ENCODE measurements at regions of chr9 and their contacts with region 1.

Region 1: DNA sequence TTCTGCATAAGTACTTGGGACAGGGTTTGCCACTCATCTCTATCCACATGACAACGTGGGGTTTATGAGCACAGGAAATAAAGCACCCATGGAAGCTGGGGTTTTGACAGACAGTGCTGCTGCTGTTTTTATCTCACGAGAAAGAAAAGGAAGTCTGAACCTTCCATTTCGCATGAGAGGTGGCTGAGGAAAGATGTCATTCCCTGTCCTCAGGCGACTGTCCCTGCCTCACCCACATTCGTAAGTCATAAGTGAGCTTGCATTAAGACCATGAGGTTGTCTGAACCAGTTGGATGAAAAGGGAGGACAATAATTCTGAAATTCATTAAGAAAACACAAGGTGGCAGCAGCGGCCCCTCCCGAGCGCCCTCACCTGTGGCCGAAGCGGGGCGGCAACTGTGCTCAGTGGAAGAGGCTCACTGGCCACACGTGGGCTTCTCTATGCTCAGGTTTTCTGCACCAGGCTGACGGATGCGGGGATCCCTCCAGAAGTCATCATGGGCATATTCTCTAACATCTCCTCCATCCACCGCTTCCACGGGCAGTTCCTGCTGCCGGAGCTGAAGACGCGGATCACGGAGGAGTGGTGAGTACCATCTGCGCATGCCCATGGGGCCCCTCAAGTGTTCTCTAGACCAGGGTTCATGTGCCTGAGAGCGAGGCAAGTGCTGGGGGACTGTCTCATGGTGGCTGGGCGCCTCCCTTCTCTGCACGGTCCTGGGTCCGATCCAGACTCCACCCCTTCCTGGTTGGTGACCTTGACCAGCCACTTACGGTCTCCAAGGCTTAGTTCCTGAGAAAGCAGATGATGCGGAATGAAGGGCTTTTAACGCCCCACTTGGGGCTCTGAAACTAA is 54.7 kb upstream of the SUSD3 start:
- DNase-seq: peak; percentile 83
- ATAC-seq: peak; percentile 90
- H3K4me3 Mint-ChIP-seq: no peak overlapping the region
- H3K27ac Mint-ChIP-seq: peak overlapping the region; percentile 65
- H3K4me1 Mint-ChIP-seq: peaks cover 57% of the 10 kb centered on the region
- H3K27me3 Mint-ChIP-seq: no peaks in the 10 kb centered on the region

Region 2: DNA sequence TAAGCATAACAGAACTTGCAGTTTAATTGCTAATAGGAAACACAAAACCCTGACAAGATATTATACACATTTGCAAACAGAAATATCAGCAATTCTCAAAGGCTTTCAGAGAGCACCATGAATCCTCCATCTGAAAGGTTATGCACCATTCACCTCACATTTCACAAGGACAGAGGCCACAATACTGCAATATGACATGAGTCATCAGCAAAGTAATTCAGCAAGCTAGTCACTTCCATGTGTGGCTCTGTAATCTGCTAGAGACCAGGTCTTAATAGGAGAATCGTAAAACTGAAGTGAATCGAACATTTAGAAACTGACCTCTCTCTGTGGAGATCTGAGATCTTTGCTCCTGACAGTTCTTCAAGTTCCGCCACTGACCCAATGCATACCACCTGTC is 738.6 kb before region 1 on chr9:
- CTCF ChIA-PET with region 1: no interaction called
- POLR2A ChIA-PET with region 1: no interaction called
- intact Hi-C with region 1: no loop called
- DNase-seq: no peak
- ATAC-seq: peak; percentile 58
- H3K4me3 Mint-ChIP-seq: no peak overlapping the region
- H3K27ac Mint-ChIP-seq: no peak overlapping the region
- H3K4me1 Mint-ChIP-seq: no peaks in the 10 kb centered on the region
- H3K27me3 Mint-ChIP-seq: no peaks in the 10 kb centered on the region

Region 3: GRCh38 chr9:92954049-92954861 is 49.5 kb before region 1 on chr9:
- CTCF ChIA-PET with region 1: interaction called, 45 read pairs
- POLR2A ChIA-PET with region 1: interaction called, 6 read pairs
- intact Hi-C with region 1: loop called (anchors 1 to 2 kb)
- DNase-seq: peak; percentile 89
- ATAC-seq: peak; percentile 85
- H3K4me3 Mint-ChIP-seq: peak overlapping the region; percentile 66
- H3K27ac Mint-ChIP-seq: peak overlapping the region; percentile 97
- H3K4me1 Mint-ChIP-seq: peaks cover 78% of the 10 kb centered on the region
- H3K27me3 Mint-ChIP-seq: no peaks in the 10 kb centered on the region

Region 4: DNA sequence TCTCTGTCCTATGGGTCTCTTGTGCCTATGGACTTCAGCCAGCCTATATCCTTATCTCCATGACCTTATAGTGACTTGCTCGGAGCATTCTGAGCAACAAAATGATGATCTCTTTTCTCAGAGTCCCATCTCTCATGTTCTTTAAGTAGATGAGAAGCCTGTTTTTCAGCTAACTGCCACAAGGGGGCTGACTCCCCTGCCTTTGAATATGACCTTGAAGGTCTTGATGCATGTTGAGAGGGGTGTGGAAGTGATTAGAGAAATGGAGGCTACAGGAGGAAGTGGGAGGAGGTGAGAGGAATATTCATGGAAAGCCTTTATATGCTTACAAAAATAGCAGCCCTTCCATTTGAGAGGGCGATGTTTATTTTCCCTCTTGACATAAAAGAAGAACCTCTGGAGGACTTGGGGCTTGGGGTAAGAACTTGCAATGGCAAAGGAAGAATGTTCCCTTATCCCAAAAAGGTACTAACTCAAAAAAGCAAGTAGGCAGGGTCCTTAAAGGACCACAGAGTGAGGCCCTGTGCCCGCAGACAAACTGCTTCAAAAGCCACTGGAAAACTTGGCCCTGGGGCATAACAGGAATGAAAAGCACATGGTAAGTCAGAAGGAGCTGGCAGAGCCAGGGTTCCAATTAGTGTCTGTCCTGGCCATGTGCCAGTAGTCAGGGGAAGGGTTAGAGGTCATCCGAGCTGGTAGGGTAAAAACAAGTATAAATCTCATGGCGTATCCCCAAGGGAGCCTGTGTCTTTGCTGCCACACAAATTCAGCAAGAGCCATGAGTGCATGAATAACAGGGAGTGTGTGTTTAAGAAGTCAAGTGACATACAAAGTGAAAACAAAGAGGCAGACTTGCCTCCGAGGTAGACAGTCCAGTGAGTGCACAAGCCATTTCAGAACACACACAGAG is 17.3 kb before region 1 on chr9:
- CTCF ChIA-PET with region 1: interaction called, 48 read pairs
- POLR2A ChIA-PET with region 1: no interaction called
- intact Hi-C with region 1: no loop called
- DNase-seq: peak; percentile 69
- ATAC-seq: no peak
- H3K4me3 Mint-ChIP-seq: no peak overlapping the region
- H3K27ac Mint-ChIP-seq: peak overlapping the region; percentile 87
- H3K4me1 Mint-ChIP-seq: peaks cover 76% of the 10 kb centered on the region
- H3K27me3 Mint-ChIP-seq: no peaks in the 10 kb centered on the region

Region 5: GRCh38 chr9:92992549-92992948 is 11.2 kb before region 1 on chr9:
- CTCF ChIA-PET with region 1: interaction called, 48 read pairs
- POLR2A ChIA-PET with region 1: no interaction called
- intact Hi-C with region 1: no loop called
- DNase-seq: no peak
- ATAC-seq: no peak
- H3K4me3 Mint-ChIP-seq: no peak overlapping the region
- H3K27ac Mint-ChIP-seq: peak overlapping the region; percentile 2
- H3K4me1 Mint-ChIP-seq: peaks cover 90% of the 10 kb centered on the region
- H3K27me3 Mint-ChIP-seq: no peaks in the 10 kb centered on the region

Region 6: DNA sequence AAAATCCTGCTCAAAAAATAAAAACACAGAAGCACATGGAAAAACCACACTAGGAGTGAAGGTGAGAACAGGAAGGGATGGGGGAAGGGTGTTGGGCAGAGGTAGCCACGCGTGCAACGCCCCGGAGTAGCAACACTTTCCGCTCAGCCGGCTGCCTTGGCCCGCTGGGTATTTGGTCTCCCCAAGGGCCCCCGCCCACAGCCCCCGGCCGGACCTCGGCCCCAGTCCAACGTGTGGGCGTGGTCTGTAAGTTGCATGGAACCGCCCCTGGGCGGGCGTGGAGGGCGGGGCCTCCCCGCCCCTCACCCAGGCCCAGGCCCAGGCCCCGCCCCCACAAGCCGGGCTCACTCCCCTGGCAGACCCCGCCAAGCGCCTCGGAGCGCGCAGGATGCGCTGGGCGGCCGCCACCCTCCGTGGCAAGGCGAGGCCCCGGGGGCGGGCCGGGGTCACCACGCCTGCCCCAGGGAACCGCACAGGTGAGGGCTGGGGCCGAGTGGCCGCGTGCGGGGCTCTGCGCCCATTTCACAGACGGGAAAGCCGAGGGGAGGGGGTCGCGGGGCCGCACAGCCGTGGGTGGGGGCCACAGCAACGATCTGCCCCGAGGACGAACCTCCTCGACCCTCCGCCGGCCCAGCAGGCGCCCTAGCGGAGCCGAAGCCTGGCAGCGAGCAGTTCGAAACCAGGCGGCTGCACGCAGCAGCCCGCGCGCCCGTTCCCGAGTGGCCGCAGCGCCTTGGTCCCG is 54.7 kb after region 1 on chr9 and contains the start of gene SUSD3:
- CTCF ChIA-PET with region 1: interaction called, 5 read pairs
- POLR2A ChIA-PET with region 1: no interaction called
- intact Hi-C with region 1: loop called in 1 of 2 experiments (anchors 2 kb)
- DNase-seq: peak; percentile 86
- ATAC-seq: peak; percentile 66
- H3K4me3 Mint-ChIP-seq: peak within 1 kb of the TSS; percentile 90
- H3K27ac Mint-ChIP-seq: peak within 1 kb of the TSS; percentile 98
- H3K4me1 Mint-ChIP-seq: peaks cover 55% of the 10 kb centered on the region
- H3K27me3 Mint-ChIP-seq: no peaks in the 10 kb centered on the region
- total RNA-seq, gene SUSD3: 51.4 to 57.9 TPM

Region 7: DNA sequence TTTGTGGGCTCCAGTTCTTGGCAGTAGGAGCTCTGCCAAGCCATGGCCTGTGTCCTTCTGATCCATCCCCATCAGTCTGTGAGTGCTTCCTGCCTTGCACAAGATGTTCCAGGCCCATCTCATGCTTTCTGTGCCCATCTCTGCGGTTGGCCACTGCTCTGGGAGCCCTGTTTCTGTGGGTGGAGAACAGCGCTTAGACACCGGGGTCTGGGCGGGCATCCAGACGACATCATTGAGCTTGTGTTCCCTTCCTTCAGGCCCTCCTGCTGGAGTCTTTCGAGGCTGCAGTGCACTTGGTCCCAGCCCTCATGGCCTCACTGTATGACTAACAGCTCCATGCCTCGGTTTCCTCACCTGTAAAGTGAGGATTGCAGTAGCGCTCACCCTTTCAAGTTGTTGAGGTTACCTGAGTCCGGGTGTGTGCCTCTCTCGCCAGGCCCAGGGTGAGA is 77.3 kb after region 1 on chr9:
- CTCF ChIA-PET with region 1: interaction called, 10 read pairs
- POLR2A ChIA-PET with region 1: no interaction called
- intact Hi-C with region 1: no loop called
- DNase-seq: no peak
- ATAC-seq: no peak
- H3K4me3 Mint-ChIP-seq: no peak overlapping the region
- H3K27ac Mint-ChIP-seq: peak overlapping the region; percentile 0
- H3K4me1 Mint-ChIP-seq: peaks cover 36% of the 10 kb centered on the region
- H3K27me3 Mint-ChIP-seq: no peaks in the 10 kb centered on the region

Region 8: DNA sequence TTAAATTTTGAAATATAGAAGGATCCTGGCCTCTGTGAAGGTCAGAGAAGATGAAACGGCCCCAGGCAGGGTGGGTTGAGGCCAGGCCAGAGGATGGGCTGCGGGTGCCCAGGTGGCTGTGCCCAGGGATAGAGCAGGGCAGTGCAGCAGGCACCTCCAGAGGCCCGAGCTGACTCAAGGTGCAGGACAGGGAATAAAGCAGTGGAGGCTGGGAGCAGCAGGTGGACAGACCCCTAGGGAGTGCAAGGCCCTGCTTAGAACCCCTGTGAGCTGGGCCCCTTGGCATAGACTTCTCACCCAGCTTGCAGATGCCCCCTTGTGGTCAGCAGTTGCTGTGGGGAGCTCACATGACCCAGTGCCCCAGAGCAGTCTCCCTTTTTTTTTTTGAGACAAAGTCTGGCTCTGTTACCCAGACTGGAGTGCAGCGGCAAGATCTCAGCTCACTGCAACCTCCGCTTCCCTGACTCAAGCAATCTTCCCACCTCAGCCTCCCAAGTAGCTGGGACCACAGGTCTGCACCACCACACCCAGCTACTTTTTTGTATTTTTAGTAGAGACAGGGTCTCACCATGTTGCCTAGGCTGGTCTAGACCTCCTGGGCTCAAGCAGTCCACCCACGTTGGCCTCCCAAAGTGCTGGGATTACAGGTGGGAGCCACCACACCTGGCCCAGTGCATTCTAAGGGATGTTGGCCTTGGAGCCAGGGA is 298.9 kb after region 1 on chr9:
- CTCF ChIA-PET with region 1: interaction called, 3 read pairs
- POLR2A ChIA-PET with region 1: interaction called, 3 read pairs
- intact Hi-C with region 1: loop called in 1 of 2 experiments (anchors 1 kb)
- DNase-seq: peak; percentile 78
- ATAC-seq: peak; percentile 88
- H3K4me3 Mint-ChIP-seq: no peak overlapping the region
- H3K27ac Mint-ChIP-seq: no peak overlapping the region
- H3K4me1 Mint-ChIP-seq: no peaks in the 10 kb centered on the region
- H3K27me3 Mint-ChIP-seq: no peaks in the 10 kb centered on the region